CD4-positive, alpha-beta memory T cell (primary cell): ENCODE measurements at regions of chr5 and their contacts with region 1.

Region 1: DNA sequence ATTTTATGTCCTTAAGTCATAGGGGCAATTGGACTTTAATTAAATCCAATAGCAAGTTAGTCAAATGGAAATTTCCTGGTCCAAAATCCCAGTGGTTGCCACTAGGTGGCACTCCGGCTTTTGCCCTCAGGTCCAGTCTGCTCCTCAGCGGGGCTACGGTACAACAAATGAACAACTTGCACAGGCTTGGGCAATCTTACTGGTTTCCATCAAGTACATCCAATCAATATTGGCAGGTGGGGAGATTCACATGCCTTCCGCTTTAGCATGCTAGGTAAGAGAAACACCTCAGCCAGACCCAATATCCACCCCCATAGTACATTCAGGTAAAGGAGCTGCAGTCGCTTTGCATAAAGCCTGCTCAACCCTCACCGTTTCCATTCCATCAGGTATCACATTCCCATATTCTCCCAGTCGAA is 6.3 kb upstream of the MXD3 start:
- DNase-seq: peak; percentile 68 to 73 (median 69)
- H3K4me3 ChIP-seq: no peak overlapping the region
- H3K4me3 Mint-ChIP-seq: no peak overlapping the region
- H3K27ac ChIP-seq: no peak overlapping the region
- H3K27ac Mint-ChIP-seq: peak overlapping the region in 2 of 7 donors; percentile 10 to 34
- H3K4me1 ChIP-seq: peaks cover 15% of the 10 kb centered on the region
- H3K4me1 Mint-ChIP-seq: peaks cover 8 to 36% (median 20%) of the 10 kb centered on the region in 4 donors
- H3K27me3 ChIP-seq: no peaks in the 10 kb centered on the region
- H3K27me3 Mint-ChIP-seq: no peaks in the 10 kb centered on the region

Region 2: DNA sequence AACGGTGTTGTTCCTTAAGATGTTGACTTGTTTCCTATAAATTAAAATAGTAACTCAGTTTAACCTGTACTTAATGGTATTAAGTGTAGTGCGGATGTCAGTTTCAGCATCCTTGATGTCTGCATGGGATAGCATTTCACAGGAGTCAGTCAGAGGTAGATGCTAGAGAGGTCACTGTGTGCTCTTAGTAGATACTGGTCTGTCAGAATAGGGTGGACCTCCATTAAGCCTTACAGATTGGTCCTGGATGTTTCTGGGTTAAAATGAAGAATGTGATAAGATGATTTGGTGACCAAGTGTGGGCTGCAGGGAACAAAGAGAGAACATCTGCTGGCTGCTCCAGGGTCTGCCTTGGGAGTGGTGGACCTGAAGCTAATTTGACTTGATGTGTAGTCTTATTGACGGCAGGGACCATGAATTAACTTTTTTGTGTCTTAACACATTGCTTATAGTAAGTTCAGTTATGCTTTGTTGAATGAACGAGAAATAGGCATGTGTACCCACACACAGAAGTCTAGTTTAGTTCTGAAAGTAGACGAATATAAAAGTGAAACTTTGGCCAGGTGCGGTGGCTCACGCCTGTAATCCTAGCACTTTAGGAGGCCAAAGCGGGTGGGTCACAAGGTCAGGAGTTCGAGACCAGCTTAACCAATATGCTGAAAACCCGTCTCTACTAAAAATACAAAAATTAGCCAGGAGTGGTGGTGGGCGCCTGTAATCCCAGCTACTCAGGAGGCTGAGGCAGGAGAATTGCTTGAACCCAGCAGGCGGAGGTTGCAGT is 27.0 kb before region 1 on chr5:
- CTCF ChIA-PET with region 1: no interaction called
- POLR2A ChIA-PET with region 1: no interaction called
- intact Hi-C with region 1: no loop called
- DNase-seq: no peak
- H3K4me3 ChIP-seq: no peak overlapping the region
- H3K4me3 Mint-ChIP-seq: no peak overlapping the region
- H3K27ac ChIP-seq: no peak overlapping the region
- H3K27ac Mint-ChIP-seq: no peak overlapping the region
- H3K4me1 ChIP-seq: peaks cover 4% of the 10 kb centered on the region
- H3K4me1 Mint-ChIP-seq: peaks cover 9 to 19% (median 10%) of the 10 kb centered on the region in 4 donors
- H3K27me3 ChIP-seq: no peaks in the 10 kb centered on the region
- H3K27me3 Mint-ChIP-seq: no peaks in the 10 kb centered on the region

Region 3: DNA sequence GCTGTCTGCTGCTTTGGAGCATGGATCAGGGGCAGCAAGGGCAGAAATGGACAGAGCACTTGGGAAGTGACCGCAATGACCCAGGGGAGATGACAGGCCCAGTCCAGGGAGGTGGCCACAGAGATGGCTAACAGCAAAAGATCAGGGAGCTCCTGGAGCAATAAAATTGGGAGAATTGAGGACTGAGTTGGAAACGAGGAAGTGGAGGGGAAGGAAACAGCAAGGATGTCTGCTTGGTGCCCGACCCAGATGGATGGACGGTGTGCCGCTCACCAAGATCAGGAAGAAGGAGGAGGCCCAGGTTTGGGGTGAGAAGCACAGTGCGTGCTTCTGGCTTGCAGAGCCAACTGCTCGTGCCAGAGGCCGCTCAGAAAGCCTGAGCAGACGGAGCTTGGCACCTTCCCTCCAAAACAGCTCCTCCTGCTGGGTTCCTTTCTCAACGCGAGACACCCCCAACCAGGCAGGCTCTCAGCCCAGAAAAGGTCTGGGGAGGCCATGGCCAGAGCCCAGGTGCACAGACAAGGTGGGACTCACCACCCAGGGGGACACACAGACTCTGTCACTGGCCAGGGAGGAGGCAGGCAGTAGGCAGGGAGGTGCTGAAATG is 64.6 kb after region 1 on chr5:
- CTCF ChIA-PET with region 1: interaction called, 27 read pairs
- POLR2A ChIA-PET with region 1: no interaction called
- intact Hi-C with region 1: no loop called
- DNase-seq: peak in 1 of 5 donors; percentile 23
- H3K4me3 ChIP-seq: no peak overlapping the region
- H3K4me3 Mint-ChIP-seq: no peak overlapping the region
- H3K27ac ChIP-seq: no peak overlapping the region
- H3K27ac Mint-ChIP-seq: peak overlapping the region in 3 of 7 donors; percentile 42 to 90 (median 76)
- H3K4me1 ChIP-seq: peaks cover 28% of the 10 kb centered on the region
- H3K4me1 Mint-ChIP-seq: peaks cover 11 to 58% (median 20%) of the 10 kb centered on the region in 4 donors
- H3K27me3 ChIP-seq: no peaks in the 10 kb centered on the region
- H3K27me3 Mint-ChIP-seq: no peaks in the 10 kb centered on the region